ENCODE measurements at regions of chr2 and their contacts with region 1.

Region 1: DNA sequence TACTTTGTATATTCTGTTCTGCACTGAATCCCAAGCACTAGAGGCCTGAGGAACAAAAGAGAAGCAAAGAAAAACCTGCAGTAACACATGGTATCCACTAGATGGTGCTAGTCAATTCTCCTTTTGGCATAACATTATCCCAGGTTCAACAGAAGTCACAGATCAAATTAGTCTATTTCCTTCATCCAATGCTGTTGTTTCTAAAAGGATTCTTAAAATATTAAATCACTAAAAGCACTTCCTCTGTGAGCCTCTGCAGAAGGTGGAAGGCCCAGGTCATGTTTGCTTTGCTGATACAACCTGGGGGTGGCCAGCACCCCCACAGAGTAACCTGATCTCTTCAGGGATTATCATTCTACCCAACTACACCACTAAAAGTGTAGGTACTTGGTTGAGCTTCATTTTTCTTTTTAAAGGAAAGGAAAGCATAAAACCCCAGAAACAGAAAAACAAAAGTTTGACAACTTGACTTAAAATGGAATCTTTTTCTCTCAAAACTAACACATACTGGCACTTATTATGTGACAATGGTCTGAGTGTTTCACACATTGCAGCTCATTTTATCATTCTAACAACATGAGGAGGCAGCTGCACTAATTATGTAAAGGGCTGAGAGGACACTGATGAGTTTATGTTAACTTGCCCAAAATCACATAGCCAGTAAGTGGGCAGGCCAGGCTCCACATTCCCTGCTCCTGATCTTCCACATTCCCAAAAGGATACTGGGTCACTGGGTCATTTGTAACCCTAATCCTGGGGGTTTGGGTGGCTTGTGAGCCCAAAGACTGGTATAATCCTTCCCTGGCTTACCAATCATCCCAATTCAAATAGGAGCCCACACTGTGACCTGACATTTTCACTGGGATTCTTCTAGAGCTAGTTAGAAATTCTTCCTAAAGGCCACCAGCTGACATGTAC is 66.8 kb upstream of the DNER start:
- H3K4me3 ChIP-seq: no peak overlapping the region
- H3K27ac ChIP-seq: no peak overlapping the region; the same call in 1 of the 2 replicates
- H3K4me1 ChIP-seq: no peaks in the 10 kb centered on the region
- CTCF ChIP-seq: no peak; the same call in 1 of the 2 replicates

Region 2: GRCh38 chr2:229673676-229674075 is 107.4 kb before region 1 on chr2:
- CTCF ChIA-PET with region 1: no interaction called
- POLR2A ChIA-PET with region 1: no interaction called
- H3K4me3 ChIP-seq: no peak overlapping the region
- H3K27ac ChIP-seq: no peak overlapping the region
- H3K4me1 ChIP-seq: no peaks in the 10 kb centered on the region
- CTCF ChIP-seq: no peak

Region 3: GRCh38 chr2:229765721-229766120 is 15.4 kb before region 1 on chr2:
- CTCF ChIA-PET with region 1: interaction called, 17 read pairs
- POLR2A ChIA-PET with region 1: no interaction called
- H3K4me3 ChIP-seq: no peak overlapping the region
- H3K27ac ChIP-seq: no peak overlapping the region
- H3K4me1 ChIP-seq: no peaks in the 10 kb centered on the region
- CTCF ChIP-seq: no peak

Region 4: GRCh38 chr2:229815858-229816257 is 34.7 kb after region 1 on chr2:
- CTCF ChIA-PET with region 1: interaction called, 10 read pairs
- POLR2A ChIA-PET with region 1: no interaction called
- H3K4me3 ChIP-seq: no peak overlapping the region
- H3K27ac ChIP-seq: no peak overlapping the region
- H3K4me1 ChIP-seq: no peaks in the 10 kb centered on the region
- CTCF ChIP-seq: no peak